ENCODE measurements at regions of chr1 and their contacts with region 1.

Region 1: DNA sequence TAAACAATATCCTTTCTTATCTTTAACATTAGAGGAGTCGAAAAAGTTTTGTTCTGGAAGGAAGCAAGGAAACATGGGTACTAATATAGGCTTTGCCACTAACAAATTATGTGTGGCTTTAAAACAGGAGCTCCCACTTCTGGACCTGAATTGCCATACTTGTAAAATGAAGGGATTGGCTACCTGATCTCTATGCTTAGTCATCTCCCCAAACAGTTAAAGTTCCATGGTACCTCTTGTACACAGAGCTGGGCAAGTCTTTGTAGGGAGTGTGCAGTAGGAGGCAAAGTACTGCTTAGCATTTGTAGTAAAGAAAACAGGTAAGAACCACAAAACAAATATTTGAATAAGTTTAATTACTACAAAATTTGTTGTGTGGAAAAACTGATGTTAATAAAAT is 81.3 kb downstream of the MAST2 start:
- DNase-seq: no peak
- H3K4me3 ChIP-seq: no peak overlapping the region
- H3K4me3 Mint-ChIP-seq: no peak overlapping the region
- H3K27ac Mint-ChIP-seq: no peak overlapping the region
- H3K4me1 ChIP-seq: peaks cover 8% of the 10 kb centered on the region; the same call in 1 of the 2 replicates
- H3K4me1 Mint-ChIP-seq: peaks cover under 1% of the 10 kb centered on the region
- H3K27me3 ChIP-seq: no peaks in the 10 kb centered on the region
- H3K27me3 Mint-ChIP-seq: no peaks in the 10 kb centered on the region
- CTCF ChIP-seq: no peak

Region 2: DNA sequence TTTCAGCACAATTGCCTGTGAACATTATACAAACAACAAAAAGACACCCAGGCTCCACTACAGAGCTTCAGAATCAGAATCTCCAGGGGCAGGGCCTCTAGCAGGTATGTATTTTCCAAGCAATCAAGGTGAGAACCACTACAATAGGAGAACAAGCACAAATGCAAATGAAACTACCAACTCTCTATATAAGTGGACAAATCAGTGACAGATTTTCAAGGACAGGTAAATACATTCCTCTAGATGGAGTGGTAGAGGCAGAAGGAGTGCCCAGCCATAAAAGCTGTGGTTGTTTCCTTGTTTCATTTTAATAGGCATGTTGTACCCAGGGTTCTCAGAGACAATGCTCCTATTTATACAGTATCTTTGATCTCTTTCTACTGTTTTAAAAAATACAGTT is 240.7 kb before region 1 on chr1:
- CTCF ChIA-PET with region 1: interaction called, 3 read pairs
- POLR2A ChIA-PET with region 1: no interaction called
- intact Hi-C with region 1: loop called (anchors 5 kb)
- DNase-seq: peak in 1 of 2 experiments; percentile 12
- H3K4me3 ChIP-seq: no peak overlapping the region
- H3K4me3 Mint-ChIP-seq: no peak overlapping the region
- H3K27ac Mint-ChIP-seq: no peak overlapping the region
- H3K4me1 ChIP-seq: no peaks in the 10 kb centered on the region
- H3K4me1 Mint-ChIP-seq: peaks cover 7% of the 10 kb centered on the region
- H3K27me3 ChIP-seq: no peaks in the 10 kb centered on the region
- H3K27me3 Mint-ChIP-seq: no peaks in the 10 kb centered on the region
- CTCF ChIP-seq: peak in 1 of 2 experiments; percentile 48

Region 3: GRCh38 chr1:45686317-45687013 is 198.2 kb before region 1 on chr1 and contains the start of gene GPBP1L1:
- CTCF ChIA-PET with region 1: no interaction called
- POLR2A ChIA-PET with region 1: no interaction called
- intact Hi-C with region 1: loop called (anchors 1 kb)
- DNase-seq: peak; percentile 95 to 97
- H3K4me3 ChIP-seq: peak within 1 kb of the TSS; percentile 77
- H3K4me3 Mint-ChIP-seq: peak within 1 kb of the TSS; percentile 84
- H3K27ac Mint-ChIP-seq: peak within 1 kb of the TSS; percentile 86
- H3K4me1 ChIP-seq: no peaks in the 10 kb centered on the region; the same call in 1 of the 2 replicates
- H3K4me1 Mint-ChIP-seq: no peaks in the 10 kb centered on the region
- H3K27me3 ChIP-seq: no peaks in the 10 kb centered on the region
- H3K27me3 Mint-ChIP-seq: no peaks in the 10 kb centered on the region
- CTCF ChIP-seq: no peak
- total RNA-seq, gene GPBP1L1: 57.3 and 61.8 TPM in 2 replicates

Region 4: DNA sequence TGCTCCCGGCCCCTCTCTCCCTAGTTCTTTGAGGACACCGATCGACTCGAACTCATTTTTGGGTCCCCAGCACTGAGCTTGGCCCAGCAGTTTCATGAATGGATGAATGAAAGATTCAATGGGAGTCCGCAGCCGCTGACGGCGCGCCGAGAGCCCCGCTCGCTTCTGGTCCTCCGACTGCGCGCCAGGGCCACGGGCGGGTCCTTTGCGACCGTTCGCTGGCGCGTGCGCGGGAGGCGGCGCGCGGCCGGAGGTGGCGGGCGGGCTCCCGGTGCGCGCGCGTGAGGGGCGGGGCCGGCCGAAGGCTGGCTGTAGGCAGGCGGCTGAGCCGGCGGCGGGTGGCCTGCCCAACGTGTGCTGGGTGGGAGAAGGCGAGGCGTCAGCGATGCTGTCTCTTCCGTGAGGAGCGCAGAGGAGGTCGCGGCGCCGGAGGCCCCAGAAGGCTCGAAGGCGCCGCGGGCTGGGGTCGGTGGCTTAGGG is 81.4 kb before region 1 on chr1 and contains the start of gene MAST2:
- CTCF ChIA-PET with region 1: no interaction called
- POLR2A ChIA-PET with region 1: no interaction called
- intact Hi-C with region 1: loop called (anchors 2 kb)
- DNase-seq: peak; percentile 78 to 91
- H3K4me3 ChIP-seq: peak within 1 kb of the TSS; percentile 59
- H3K4me3 Mint-ChIP-seq: peak within 1 kb of the TSS; percentile 98
- H3K27ac Mint-ChIP-seq: peak within 1 kb of the TSS; percentile 56
- H3K4me1 ChIP-seq: peaks cover 10% of the 10 kb centered on the region; the same call in 1 of the 2 replicates
- H3K4me1 Mint-ChIP-seq: peaks cover 24% of the 10 kb centered on the region
- H3K27me3 ChIP-seq: no peaks in the 10 kb centered on the region
- H3K27me3 Mint-ChIP-seq: no peaks in the 10 kb centered on the region
- CTCF ChIP-seq: no peak
- total RNA-seq, gene MAST2: 43.3 and 49.6 TPM in 2 replicates

Region 5: DNA sequence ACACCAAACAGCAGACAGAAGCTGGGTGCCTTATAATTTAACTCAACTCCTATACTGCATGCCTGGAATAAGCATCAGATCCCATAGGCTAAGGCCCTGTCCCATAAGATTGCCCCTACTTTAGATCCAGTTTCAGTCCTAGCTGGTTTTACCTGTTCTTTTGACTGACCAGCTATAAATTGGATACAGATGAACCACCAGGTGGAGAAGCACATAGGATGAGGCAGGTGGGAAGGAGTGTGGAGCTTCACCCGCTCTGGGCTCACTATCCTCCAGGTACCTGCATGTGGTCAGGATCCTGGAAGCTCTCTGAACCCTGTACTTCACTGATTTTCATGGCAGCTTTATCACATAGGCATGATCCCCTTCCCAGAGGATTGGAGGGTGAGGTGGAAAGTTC is 30.0 kb before region 1 on chr1:
- CTCF ChIA-PET with region 1: interaction called, 3 read pairs
- POLR2A ChIA-PET with region 1: interaction called, 7 read pairs
- intact Hi-C with region 1: loop called (anchors 1 kb)
- DNase-seq: peak; percentile 39 to 42
- H3K4me3 ChIP-seq: no peak overlapping the region
- H3K4me3 Mint-ChIP-seq: no peak overlapping the region
- H3K27ac Mint-ChIP-seq: no peak overlapping the region
- H3K4me1 ChIP-seq: peaks cover 9% of the 10 kb centered on the region; the same call in 1 of the 2 replicates
- H3K4me1 Mint-ChIP-seq: no peaks in the 10 kb centered on the region
- H3K27me3 ChIP-seq: no peaks in the 10 kb centered on the region
- H3K27me3 Mint-ChIP-seq: no peaks in the 10 kb centered on the region
- CTCF ChIP-seq: no peak

Region 6: GRCh38 chr1:46372425-46372824 is 487.7 kb after region 1 on chr1:
- CTCF ChIA-PET with region 1: no interaction called
- POLR2A ChIA-PET with region 1: no interaction called
- intact Hi-C with region 1: no loop called
- DNase-seq: no peak
- H3K4me3 ChIP-seq: no peak overlapping the region
- H3K4me3 Mint-ChIP-seq: no peak overlapping the region
- H3K27ac Mint-ChIP-seq: no peak overlapping the region
- H3K4me1 ChIP-seq: peaks cover 12% of the 10 kb centered on the region
- H3K4me1 Mint-ChIP-seq: peaks cover 19% of the 10 kb centered on the region
- H3K27me3 ChIP-seq: no peaks in the 10 kb centered on the region
- H3K27me3 Mint-ChIP-seq: no peaks in the 10 kb centered on the region
- CTCF ChIP-seq: peak in 1 of 2 experiments; percentile 15